Spleen (tissue), 13 donors: ENCODE measurements at regions of chr3 and their contacts with region 1.

Region 1: DNA sequence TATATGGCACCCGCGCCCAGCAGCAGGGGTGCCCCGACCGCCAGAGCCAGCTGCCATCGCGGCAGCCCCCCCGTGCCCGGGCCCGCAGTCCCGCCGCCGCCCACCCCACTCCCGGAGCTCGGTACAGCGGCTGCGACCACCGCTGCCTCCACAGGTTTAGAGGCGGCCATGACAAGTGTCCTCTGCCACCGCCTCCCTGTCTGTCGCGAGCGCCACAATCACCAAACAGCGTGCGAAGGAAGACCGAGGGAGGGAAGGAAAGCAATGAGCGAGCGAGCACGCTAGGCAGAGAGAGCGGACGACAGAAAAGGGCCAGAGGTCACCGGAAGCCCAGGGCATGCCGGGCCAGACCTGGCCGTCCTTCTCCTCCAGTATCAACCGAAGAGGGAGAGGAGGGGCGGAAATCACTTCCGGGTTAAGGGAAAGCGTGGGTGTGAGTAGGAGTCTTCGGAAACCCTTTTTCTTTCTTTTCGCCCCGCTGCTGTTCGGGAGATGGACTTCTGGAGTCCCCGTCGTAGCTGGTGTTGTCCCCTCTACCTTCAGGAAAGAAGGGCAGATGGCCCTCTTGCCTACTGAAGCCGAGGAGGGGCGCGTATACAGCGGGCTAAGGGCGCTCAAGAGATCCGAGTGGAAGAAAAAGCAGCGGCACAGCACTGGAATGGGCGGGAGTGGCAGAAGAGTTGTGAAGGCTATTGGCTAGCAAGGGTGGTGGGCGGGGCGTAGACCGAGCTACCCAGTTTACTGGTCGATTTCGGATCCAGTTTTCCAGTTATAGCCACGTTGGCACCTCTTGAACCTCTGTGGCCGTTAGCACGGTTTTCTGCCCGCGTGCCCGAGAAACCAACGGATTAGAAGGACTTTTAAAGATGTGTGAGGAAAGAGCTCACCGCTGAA is at the starts of genes LNP1 and TOMM70:
- DNase-seq: peak; percentile 97
- H3K4me3 ChIP-seq: peak within 1 kb of the TSS; percentile 72 to 97 (median 94)
- H3K27ac ChIP-seq: peak within 1 kb of the TSS; percentile 65 to 95 (median 92)
- H3K4me1 ChIP-seq: peaks cover 26 to 72% (median 53%) of the 10 kb centered on the region in 6 donors
- H3K27me3 ChIP-seq: no peaks in the 10 kb centered on the region
- CTCF ChIP-seq: peak in 1 of 11 experiments; percentile 38
- POLR2A ChIP-seq: peak in 2 of 3 donors; percentile 41 to 79
- total RNA-seq, gene LNP1: 1.2 to 2.6 (median 1.6) TPM
- total RNA-seq, gene TOMM70: 28.1 to 37.2 (median 31.5) TPM

Region 2: DNA sequence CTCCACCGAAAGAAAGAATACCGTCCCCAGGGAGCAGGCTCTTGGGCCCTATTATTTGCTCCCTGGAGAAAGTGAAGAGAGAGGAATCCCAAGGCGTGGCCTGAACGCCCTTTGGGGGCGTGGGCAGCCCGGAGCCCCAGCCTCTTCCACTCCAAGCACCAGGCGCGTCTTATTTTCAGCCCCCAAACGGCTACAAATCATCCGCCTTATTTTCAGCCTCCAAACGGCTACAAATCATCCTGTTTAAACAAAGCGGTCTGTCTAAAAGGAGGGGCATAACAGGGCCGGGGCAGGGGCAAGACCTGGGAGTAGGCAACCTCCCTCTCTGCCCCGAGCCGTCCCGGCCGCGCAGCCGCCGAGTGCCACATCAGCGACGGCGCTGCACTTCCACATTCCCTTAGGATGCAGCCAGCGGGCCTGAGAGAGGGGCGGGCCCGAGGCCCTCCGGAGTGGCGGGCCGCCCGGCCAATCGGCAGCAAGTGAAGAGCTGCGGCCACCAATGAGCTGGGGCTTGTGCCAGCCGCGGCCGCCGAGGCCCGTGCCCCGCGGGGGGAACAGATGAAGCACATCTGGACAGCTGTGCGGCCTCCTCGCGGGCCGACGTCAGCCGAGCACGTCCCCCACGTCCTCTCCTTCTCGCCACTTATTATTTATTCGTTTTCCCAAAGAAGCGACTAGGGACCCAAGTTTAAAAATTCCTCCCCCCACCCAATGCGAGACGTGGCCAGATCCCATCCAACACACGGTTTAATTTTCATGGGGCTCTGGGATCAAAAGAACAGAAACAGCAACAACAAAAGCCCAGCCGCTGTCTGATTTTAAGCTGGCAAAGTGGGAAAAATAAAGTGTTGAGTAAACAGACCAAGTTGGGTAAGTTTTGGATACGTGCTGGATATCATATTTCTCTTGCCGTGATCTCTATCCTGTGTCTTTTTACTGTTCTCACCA is 91.3 kb after region 1 on chr3 and contains the start of gene TMEM45A:
- intact Hi-C with region 1: loop called (anchors 10 kb)
- DNase-seq: peak; percentile 94
- H3K4me3 ChIP-seq: peak within 1 kb of the TSS; percentile 45 to 75 (median 55)
- H3K27ac ChIP-seq: peak within 1 kb of the TSS; percentile 5 to 83 (median 77)
- H3K4me1 ChIP-seq: peaks cover 0 to 36% (median 20%) of the 10 kb centered on the region in 6 donors
- H3K27me3 ChIP-seq: peaks cover 0 to 3% (median 0%) of the 10 kb centered on the region in 7 donors
- CTCF ChIP-seq: peak in 3 of 11 experiments; percentile 6 to 13 (median 8)
- POLR2A ChIP-seq: peak in 1 of 3 donors; percentile 30
- total RNA-seq, gene TMEM45A: 4.4 to 13.4 (median 6.3) TPM